ENCODE measurements at regions of chr13 and their contacts with region 1.

Region 1: GRCh38 chr13:76886292-76887075 is at the start of gene KCTD12:
- DNase-seq: peak; percentile 54 to 87 (median 77)
- ATAC-seq: peak; percentile 78
- H3K4me3 ChIP-seq: peak within 1 kb of the TSS; percentile 69 to 82
- H3K4me3 Mint-ChIP-seq: peak within 1 kb of the TSS; percentile 86
- H3K27ac ChIP-seq: peak within 1 kb of the TSS in 1 of 2 experiments; percentile 49
- H3K27ac Mint-ChIP-seq: peak within 1 kb of the TSS; percentile 83
- H3K4me1 ChIP-seq: peaks cover 28% of the 10 kb centered on the region
- H3K4me1 Mint-ChIP-seq: peaks cover 25% of the 10 kb centered on the region
- H3K27me3 ChIP-seq: peaks cover 0 to 14% of the 10 kb centered on the region in 2 experiments
- H3K27me3 Mint-ChIP-seq: peaks cover 12% of the 10 kb centered on the region
- CTCF ChIP-seq: no peak
- total RNA-seq, gene KCTD12: 2.4 to 2.6 TPM

Region 2: DNA sequence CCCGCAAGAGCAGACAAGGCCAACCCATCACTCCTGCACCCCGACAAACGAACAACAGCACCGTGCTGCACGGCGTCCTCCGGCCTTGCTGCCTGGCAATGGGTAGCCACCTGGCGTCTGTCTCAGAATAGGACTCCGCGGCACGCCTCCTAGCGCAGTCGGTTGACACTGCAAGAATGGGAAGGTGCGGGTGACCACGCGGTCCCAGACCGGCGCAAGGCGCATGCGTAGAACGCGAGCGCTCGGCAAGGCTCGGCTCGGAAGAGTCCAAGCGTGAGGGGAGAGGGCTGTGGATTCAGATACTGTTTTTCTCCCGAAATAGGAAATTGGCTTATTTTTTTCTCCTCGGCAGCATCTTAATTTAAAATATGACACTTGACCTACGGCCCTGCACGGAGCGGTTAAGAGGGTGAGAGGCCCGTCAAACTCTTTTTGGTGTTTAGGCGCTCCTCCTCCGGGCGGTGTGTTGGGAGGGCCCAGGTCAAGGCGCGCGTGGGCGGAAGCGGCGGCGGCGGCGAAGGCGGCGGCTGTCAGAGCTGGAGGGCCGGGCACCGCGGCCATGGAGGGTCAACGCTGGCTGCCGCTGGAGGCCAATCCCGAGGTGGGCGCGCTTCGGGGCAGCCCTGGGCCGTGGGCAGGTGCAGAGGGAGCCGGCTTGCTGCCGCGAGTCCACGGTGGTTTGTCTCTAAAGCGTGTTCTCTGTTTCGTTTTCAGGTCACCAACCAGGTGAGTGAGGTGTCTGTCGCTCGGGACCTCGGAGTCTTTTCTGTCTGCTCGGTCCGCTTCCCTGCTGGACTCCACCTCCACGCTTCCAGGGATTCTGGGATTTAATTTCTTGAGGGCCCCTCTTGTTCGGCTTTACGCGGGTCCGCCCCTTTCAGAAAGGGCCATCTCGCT is 1337.0 kb before region 1 on chr13 and contains the start of gene UCHL3:
- CTCF ChIA-PET with region 1: no interaction called
- POLR2A ChIA-PET with region 1: no interaction called
- intact Hi-C with region 1: loop called in 1 of 2 experiments (anchors 10 kb)
- DNase-seq: peak; percentile 95 to 99 (median 97)
- ATAC-seq: peak; percentile 92
- H3K4me3 ChIP-seq: peak within 1 kb of the TSS; percentile 74 to 82
- H3K4me3 Mint-ChIP-seq: peak within 1 kb of the TSS; percentile 95
- H3K27ac ChIP-seq: peak within 1 kb of the TSS; percentile 84 to 87
- H3K27ac Mint-ChIP-seq: peak within 1 kb of the TSS; percentile 97
- H3K4me1 ChIP-seq: peaks cover 19% of the 10 kb centered on the region
- H3K4me1 Mint-ChIP-seq: peaks cover 44% of the 10 kb centered on the region
- H3K27me3 ChIP-seq: no peaks in the 10 kb centered on the region
- H3K27me3 Mint-ChIP-seq: no peaks in the 10 kb centered on the region
- CTCF ChIP-seq: peak; percentile 91
- total RNA-seq, gene UCHL3: 17.7 to 17.9 TPM

Region 3: DNA sequence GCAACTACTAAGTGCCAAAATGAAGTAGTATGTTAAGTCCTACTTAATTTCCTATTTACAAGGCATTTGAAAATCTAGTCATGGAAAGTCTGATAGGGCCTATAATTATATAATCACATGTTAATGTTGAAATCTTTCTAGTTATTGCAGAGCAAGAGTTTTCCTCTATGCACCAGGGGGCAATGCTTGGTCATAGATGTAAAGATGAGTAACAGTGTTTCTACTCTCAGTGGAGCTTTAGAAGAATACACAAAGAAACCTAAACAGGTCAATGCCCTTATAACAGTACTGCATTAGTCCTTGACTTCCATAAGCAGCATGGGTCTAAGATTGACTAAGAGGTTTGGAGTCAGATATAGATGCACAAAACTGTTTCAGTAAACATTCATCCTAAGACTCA is 218.9 kb before region 1 on chr13:
- CTCF ChIA-PET with region 1: interaction called, 33 read pairs
- POLR2A ChIA-PET with region 1: interaction called, 14 read pairs
- intact Hi-C with region 1: loop called in 1 of 2 experiments (anchors 5 kb)
- DNase-seq: peak in 4 of 9 experiments; percentile 5 to 54 (median 27)
- ATAC-seq: peak; percentile 36
- H3K4me3 ChIP-seq: no peak overlapping the region
- H3K4me3 Mint-ChIP-seq: no peak overlapping the region
- H3K27ac ChIP-seq: no peak overlapping the region
- H3K27ac Mint-ChIP-seq: no peak overlapping the region
- H3K4me1 ChIP-seq: no peaks in the 10 kb centered on the region
- H3K4me1 Mint-ChIP-seq: no peaks in the 10 kb centered on the region
- H3K27me3 ChIP-seq: no peaks in the 10 kb centered on the region
- H3K27me3 Mint-ChIP-seq: no peaks in the 10 kb centered on the region
- CTCF ChIP-seq: no peak

Region 4: GRCh38 chr13:76848596-76848995 is 37.9 kb before region 1 on chr13:
- CTCF ChIA-PET with region 1: interaction called, 3 read pairs
- POLR2A ChIA-PET with region 1: no interaction called
- intact Hi-C with region 1: loop called in 1 of 2 experiments (anchors 5 kb)
- DNase-seq: no peak
- ATAC-seq: no peak
- H3K4me3 ChIP-seq: no peak overlapping the region
- H3K4me3 Mint-ChIP-seq: no peak overlapping the region
- H3K27ac ChIP-seq: no peak overlapping the region
- H3K27ac Mint-ChIP-seq: no peak overlapping the region
- H3K4me1 ChIP-seq: no peaks in the 10 kb centered on the region
- H3K4me1 Mint-ChIP-seq: no peaks in the 10 kb centered on the region
- H3K27me3 ChIP-seq: no peaks in the 10 kb centered on the region
- H3K27me3 Mint-ChIP-seq: no peaks in the 10 kb centered on the region
- CTCF ChIP-seq: no peak

Region 5: GRCh38 chr13:77026818-77027585 is 140.5 kb after region 1 on chr13 and contains the start of gene FBXL3:
- CTCF ChIA-PET with region 1: no interaction called
- POLR2A ChIA-PET with region 1: interaction called, 11 read pairs
- intact Hi-C with region 1: loop called in 1 of 2 experiments (anchors 2 kb)
- DNase-seq: peak; percentile 68 to 92 (median 80)
- ATAC-seq: peak; percentile 64
- H3K4me3 ChIP-seq: peak within 1 kb of the TSS; percentile 73 to 80
- H3K4me3 Mint-ChIP-seq: peak within 1 kb of the TSS; percentile 97
- H3K27ac ChIP-seq: peak within 1 kb of the TSS; percentile 80 to 97
- H3K27ac Mint-ChIP-seq: peak within 1 kb of the TSS; percentile 99
- H3K4me1 ChIP-seq: peaks cover 40% of the 10 kb centered on the region
- H3K4me1 Mint-ChIP-seq: peaks cover 51% of the 10 kb centered on the region
- H3K27me3 ChIP-seq: no peaks in the 10 kb centered on the region
- H3K27me3 Mint-ChIP-seq: no peaks in the 10 kb centered on the region
- CTCF ChIP-seq: no peak
- total RNA-seq, gene FBXL3: 91.3 to 97.0 TPM